ENCODE measurements at regions of chr3 and their contacts with region 1.

Region 1: DNA sequence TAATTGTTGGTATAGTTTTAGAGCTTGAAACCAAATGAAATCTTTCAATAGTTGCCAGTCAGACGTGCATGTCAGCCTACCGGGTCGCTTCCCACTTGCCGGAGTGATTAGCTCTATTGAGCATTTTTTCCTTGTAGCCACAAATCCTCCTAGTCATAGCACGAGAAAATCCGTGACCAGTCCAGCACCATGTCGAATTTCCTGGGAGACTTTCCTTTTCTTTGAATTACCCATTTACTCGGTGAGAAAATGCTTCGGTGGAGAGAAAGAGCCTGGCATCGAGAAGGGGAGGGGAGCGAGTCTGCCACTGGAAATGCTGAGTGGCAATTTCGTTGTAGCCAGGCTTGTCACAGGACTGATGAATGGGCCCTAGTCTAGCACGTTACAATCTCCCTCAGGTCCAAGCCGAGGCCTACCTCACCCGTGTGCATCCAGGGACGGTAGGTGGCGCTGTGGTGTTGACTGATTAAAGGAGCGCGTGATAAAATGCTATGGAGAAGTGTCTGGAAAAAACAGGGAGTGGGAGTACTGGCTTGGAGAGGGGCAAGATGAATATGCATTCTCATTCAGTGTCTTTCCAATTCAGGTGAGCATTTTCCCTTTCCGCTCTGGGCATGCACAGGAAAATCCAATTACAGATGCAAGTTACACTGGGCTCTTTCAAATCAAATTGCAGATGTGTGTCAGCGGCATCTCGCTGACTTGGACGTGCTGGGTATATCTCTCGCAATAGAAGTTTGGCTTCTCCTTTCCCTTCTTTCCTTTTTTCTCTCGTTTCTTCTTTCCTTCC is 238.8 kb downstream of the EDEM1 start:
- DNase-seq: peak; percentile 88
- H3K4me3 Mint-ChIP-seq: no peak overlapping the region
- H3K27ac Mint-ChIP-seq: no peak overlapping the region
- H3K4me1 Mint-ChIP-seq: no peaks in the 10 kb centered on the region
- H3K27me3 Mint-ChIP-seq: peaks cover 8% of the 10 kb centered on the region

Region 2: DNA sequence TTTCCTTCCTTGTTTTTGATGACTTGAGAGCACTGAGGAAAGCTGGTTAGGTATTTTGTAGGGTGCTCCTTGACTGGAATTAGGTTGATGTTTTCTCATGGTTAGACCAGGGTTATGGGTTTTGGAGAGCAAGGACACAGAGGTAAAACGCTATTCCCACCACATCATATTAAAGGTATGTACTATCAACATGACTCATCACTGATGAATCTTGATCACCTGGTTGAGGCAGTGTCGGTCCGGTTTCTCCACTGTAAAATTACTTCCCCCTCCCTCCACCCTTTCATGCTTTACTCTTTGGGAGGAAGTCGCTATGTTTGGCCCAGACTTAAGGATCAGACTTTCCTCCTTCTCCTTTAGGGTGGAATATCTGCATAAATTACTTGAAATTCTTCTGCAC is 37.2 kb before region 1 on chr3:
- intact Hi-C with region 1: no loop called
- DNase-seq: no peak
- H3K4me3 Mint-ChIP-seq: no peak overlapping the region
- H3K27ac Mint-ChIP-seq: no peak overlapping the region
- H3K4me1 Mint-ChIP-seq: no peaks in the 10 kb centered on the region
- H3K27me3 Mint-ChIP-seq: peaks cover 2% of the 10 kb centered on the region

Region 3: DNA sequence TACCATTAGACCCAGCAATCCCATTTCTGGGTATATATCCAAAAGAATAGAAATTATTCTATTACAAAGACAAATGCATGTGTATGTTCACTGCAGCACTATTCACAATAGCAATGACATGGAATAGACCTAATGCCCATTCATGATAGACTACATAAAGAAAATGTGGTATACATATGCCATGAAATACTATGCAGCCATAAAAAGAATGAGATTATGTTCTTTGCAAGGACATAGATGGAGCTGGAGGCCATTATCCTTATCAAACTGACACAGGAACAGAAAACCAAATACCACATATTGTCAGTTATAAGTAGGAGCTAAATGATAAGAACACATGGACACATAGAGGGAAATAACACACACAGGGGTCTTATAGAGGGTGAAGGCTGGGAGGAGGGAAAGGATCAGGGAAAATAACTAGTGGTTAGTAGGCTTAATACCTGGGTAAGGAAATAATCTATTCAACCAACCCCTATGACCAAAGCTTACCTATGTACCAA is 128.0 kb after region 1 on chr3:
- intact Hi-C with region 1: no loop called
- DNase-seq: no peak
- H3K4me3 Mint-ChIP-seq: no peak overlapping the region
- H3K27ac Mint-ChIP-seq: no peak overlapping the region
- H3K4me1 Mint-ChIP-seq: no peaks in the 10 kb centered on the region
- H3K27me3 Mint-ChIP-seq: no peaks in the 10 kb centered on the region

Region 4: DNA sequence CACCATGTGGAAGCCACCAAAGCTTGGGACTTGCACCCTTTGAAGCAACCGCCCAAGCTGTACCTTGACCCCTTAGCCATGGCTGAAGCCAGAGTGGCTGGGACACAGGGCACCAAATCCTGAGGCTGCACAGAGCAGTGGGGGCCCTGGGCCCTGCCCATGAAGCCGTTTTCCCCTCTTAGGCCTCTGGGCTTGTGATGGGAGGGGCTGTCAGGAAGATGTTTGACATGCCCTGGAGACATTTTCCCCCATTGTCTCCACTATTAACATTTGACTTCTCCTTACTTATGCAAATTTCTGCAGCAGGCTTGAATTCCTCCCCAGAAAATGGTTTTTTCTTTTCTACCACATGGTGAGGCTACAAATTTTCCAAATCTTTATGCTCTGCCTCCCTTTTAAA is 283.4 kb after region 1 on chr3:
- intact Hi-C with region 1: loop called (anchors 10 kb)
- DNase-seq: no peak
- H3K4me3 Mint-ChIP-seq: no peak overlapping the region
- H3K27ac Mint-ChIP-seq: no peak overlapping the region
- H3K4me1 Mint-ChIP-seq: no peaks in the 10 kb centered on the region
- H3K27me3 Mint-ChIP-seq: no peaks in the 10 kb centered on the region

Region 5: DNA sequence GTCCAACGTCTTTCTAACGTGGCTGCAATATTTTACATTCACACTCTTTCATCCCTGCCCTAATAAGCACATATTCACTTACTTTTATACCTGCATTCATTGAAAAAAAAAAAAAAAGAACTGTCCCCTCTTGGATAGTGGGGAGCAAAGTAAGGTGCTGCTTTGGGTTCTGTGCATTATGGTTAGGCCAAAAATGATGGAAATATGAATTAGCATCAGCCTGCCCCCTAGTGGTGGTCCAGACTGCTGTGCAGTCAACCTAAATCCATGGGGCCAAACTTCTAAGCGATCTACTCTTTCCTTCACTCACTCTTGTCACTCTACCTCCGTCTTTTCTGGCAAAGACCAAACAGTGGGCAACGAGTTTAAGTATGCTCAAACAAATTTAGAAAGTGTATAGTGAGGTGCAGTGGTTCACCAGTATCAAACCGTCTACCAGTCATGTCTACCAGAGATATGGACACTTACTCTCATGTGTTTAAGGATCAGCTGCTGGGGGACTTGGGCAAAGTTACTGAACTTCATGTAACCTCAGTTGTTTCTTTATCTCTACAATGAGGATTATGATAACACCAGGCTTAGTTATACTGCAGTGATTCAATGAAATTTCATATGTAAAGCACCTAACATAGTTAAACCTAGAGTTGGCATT is 1373.1 kb after region 1 on chr3:
- intact Hi-C with region 1: loop called (anchors 5 kb)
- DNase-seq: peak; percentile 74
- H3K4me3 Mint-ChIP-seq: no peak overlapping the region
- H3K27ac Mint-ChIP-seq: no peak overlapping the region
- H3K4me1 Mint-ChIP-seq: no peaks in the 10 kb centered on the region
- H3K27me3 Mint-ChIP-seq: no peaks in the 10 kb centered on the region